CD4-positive, alpha-beta T cell (primary cell): ENCODE measurements at regions of chr17 and their contacts with region 1.

Region 1: GRCh38 chr17:39621523-39622379 is 5.0 kb upstream of the PPP1R1B start:
- DNase-seq: peak; percentile 67 to 96 (median 88)
- ATAC-seq: peak; percentile 74
- H3K4me3 ChIP-seq: peak overlapping the region; percentile 25
- H3K4me3 Mint-ChIP-seq: peak overlapping the region; percentile 62
- H3K27ac ChIP-seq: no peak overlapping the region
- H3K27ac Mint-ChIP-seq: peak overlapping the region; percentile 74
- H3K4me1 ChIP-seq: peaks cover 48% of the 10 kb centered on the region
- H3K4me1 Mint-ChIP-seq: peaks cover 25% of the 10 kb centered on the region
- H3K27me3 ChIP-seq: peaks cover 15 to 19% of the 10 kb centered on the region in 2 experiments
- H3K27me3 Mint-ChIP-seq: peaks cover 30% of the 10 kb centered on the region
- CTCF ChIP-seq: peak; percentile 100

Region 2: GRCh38 chr17:39450847-39451581 is 170.7 kb before region 1 on chr17 and contains the start of gene MED1:
- CTCF ChIA-PET with region 1: no interaction called
- POLR2A ChIA-PET with region 1: no interaction called
- intact Hi-C with region 1: no loop called
- DNase-seq: peak; percentile 80 to 98 (median 86)
- ATAC-seq: peak; percentile 92
- H3K4me3 ChIP-seq: peak within 1 kb of the TSS; percentile 75
- H3K4me3 Mint-ChIP-seq: peak within 1 kb of the TSS; percentile 99
- H3K27ac ChIP-seq: peak within 1 kb of the TSS; percentile 80 to 82
- H3K27ac Mint-ChIP-seq: peak within 1 kb of the TSS; percentile 99
- H3K4me1 ChIP-seq: peaks cover 22% of the 10 kb centered on the region
- H3K4me1 Mint-ChIP-seq: peaks cover 29% of the 10 kb centered on the region
- H3K27me3 ChIP-seq: no peaks in the 10 kb centered on the region
- H3K27me3 Mint-ChIP-seq: no peaks in the 10 kb centered on the region
- CTCF ChIP-seq: no peak
- total RNA-seq, gene MED1: 24.7 to 28.7 TPM

Region 3: GRCh38 chr17:39605492-39606433 is 16.0 kb before region 1 on chr17:
- CTCF ChIA-PET with region 1: interaction called, 17 read pairs
- POLR2A ChIA-PET with region 1: no interaction called
- intact Hi-C with region 1: no loop called
- DNase-seq: peak in 1 of 14 experiments; percentile 27
- ATAC-seq: no peak
- H3K4me3 ChIP-seq: no peak overlapping the region
- H3K4me3 Mint-ChIP-seq: peak overlapping the region; percentile 7
- H3K27ac ChIP-seq: no peak overlapping the region
- H3K27ac Mint-ChIP-seq: no peak overlapping the region
- H3K4me1 ChIP-seq: peaks cover 48% of the 10 kb centered on the region
- H3K4me1 Mint-ChIP-seq: peaks cover 20% of the 10 kb centered on the region
- H3K27me3 ChIP-seq: peaks cover 76 to 88% of the 10 kb centered on the region in 2 experiments
- H3K27me3 Mint-ChIP-seq: peaks cover 80% of the 10 kb centered on the region
- CTCF ChIP-seq: no peak

Region 4: DNA sequence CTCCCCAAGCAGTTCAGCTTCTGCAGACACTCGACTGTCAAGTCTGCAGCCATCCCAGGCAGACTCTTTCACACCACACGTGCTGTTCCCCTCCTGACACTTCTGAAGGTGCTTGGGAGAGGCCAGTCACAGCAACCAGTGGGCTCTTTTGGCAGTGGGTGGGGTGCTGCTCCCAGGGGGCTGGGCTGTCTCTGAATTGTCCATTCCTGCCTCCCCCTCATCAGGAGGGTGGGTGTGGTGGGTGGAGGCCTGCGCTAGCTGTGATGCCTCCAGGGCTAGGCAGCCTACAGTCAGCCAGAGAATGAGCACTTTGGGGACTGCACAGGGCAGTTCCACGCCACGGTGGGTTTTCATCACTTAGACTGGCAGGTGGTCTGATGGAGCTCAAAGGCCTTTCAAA is 25.5 kb after region 1 on chr17:
- CTCF ChIA-PET with region 1: interaction called, 20 read pairs
- POLR2A ChIA-PET with region 1: interaction called, 3 read pairs
- intact Hi-C with region 1: no loop called
- DNase-seq: no peak
- ATAC-seq: no peak
- H3K4me3 ChIP-seq: no peak overlapping the region
- H3K4me3 Mint-ChIP-seq: no peak overlapping the region
- H3K27ac ChIP-seq: no peak overlapping the region
- H3K27ac Mint-ChIP-seq: no peak overlapping the region
- H3K4me1 ChIP-seq: peaks cover 39% of the 10 kb centered on the region
- H3K4me1 Mint-ChIP-seq: peaks cover 53% of the 10 kb centered on the region
- H3K27me3 ChIP-seq: no peaks in the 10 kb centered on the region
- H3K27me3 Mint-ChIP-seq: no peaks in the 10 kb centered on the region
- CTCF ChIP-seq: no peak

Region 5: GRCh38 chr17:39668199-39668966 is 46.6 kb after region 1 on chr17 and contains the start of gene PNMT:
- CTCF ChIA-PET with region 1: interaction called, 19 read pairs
- POLR2A ChIA-PET with region 1: interaction called, 6 read pairs
- intact Hi-C with region 1: loop called (anchors 1 to 2 kb)
- DNase-seq: peak; percentile 42 to 85 (median 62)
- ATAC-seq: peak; percentile 80
- H3K4me3 ChIP-seq: peak within 1 kb of the TSS; percentile 32
- H3K4me3 Mint-ChIP-seq: peak within 1 kb of the TSS; percentile 59
- H3K27ac ChIP-seq: no peak within 1 kb of the TSS
- H3K27ac Mint-ChIP-seq: no peak within 1 kb of the TSS
- H3K4me1 ChIP-seq: peaks cover 35% of the 10 kb centered on the region
- H3K4me1 Mint-ChIP-seq: peaks cover 15% of the 10 kb centered on the region
- H3K27me3 ChIP-seq: peaks cover 15 to 34% of the 10 kb centered on the region in 2 experiments
- H3K27me3 Mint-ChIP-seq: peaks cover 34% of the 10 kb centered on the region
- CTCF ChIP-seq: peak; percentile 78
- total RNA-seq, gene PNMT: 0.47 TPM in 1 of 2 experiments, not detected in the other

Region 6: DNA sequence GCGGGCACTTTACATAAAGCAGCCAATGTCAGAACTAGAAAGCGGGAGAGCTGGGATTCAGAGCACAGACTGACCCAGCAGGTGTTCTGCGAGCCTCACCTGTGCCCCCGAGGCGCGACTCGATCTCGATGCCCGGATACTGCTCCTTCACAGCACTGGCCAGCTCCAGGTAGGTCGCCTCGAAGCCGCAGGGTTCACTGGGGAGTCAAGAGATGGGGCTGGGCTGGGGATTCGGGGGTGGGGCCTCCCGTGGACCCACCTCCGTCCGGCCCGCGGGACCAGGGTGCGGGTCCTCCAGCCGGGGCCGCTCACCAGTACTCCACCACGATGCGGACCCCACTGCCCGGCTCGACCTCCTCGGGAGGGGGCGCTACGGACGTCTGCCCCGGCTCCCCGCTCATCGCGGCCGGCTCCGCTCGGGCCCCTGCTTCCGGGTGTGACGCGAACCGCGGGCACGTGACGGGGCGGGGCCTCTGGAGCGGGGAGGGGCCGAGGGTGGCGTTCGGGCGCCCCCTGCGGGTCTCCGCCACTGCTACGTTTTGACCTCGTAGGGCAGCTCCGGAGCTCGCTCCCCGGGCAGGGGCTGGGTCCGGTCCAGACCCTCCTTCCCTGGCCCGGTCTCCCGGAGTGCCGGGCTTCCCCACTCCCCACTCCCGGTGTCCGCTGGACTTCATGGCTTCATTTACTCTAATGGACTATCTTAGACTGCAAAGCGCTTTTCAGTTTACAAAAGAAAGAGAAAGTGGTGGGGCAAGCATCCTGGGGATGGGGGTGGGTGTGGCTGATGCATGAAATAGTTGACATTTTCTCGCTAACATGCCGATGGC is 108.6 kb after region 1 on chr17 and contains the start of gene MIEN1:
- CTCF ChIA-PET with region 1: interaction called, 33 read pairs
- POLR2A ChIA-PET with region 1: interaction called, 12 read pairs
- intact Hi-C with region 1: loop called (anchors 1 to 5 kb)
- DNase-seq: peak; percentile 86 to 98 (median 94)
- ATAC-seq: peak; percentile 91
- H3K4me3 ChIP-seq: peak within 1 kb of the TSS; percentile 79
- H3K4me3 Mint-ChIP-seq: peak within 1 kb of the TSS; percentile 91
- H3K27ac ChIP-seq: peak within 1 kb of the TSS; percentile 90 to 91
- H3K27ac Mint-ChIP-seq: peak within 1 kb of the TSS; percentile 88
- H3K4me1 ChIP-seq: peaks cover 23% of the 10 kb centered on the region
- H3K4me1 Mint-ChIP-seq: peaks cover 17% of the 10 kb centered on the region
- H3K27me3 ChIP-seq: no peaks in the 10 kb centered on the region
- H3K27me3 Mint-ChIP-seq: no peaks in the 10 kb centered on the region
- CTCF ChIP-seq: peak; percentile 91
- total RNA-seq, gene MIEN1: 31.5 to 32.3 TPM

Region 7: GRCh38 chr17:39863918-39864746 is 242.4 kb after region 1 on chr17 and contains the start of gene IKZF3:
- CTCF ChIA-PET with region 1: interaction called, 8 read pairs
- POLR2A ChIA-PET with region 1: interaction called, 3 read pairs
- intact Hi-C with region 1: loop called (anchors 2 to 10 kb)
- DNase-seq: peak; percentile 55 to 95 (median 73)
- ATAC-seq: peak; percentile 75
- H3K4me3 ChIP-seq: peak within 1 kb of the TSS; percentile 80
- H3K4me3 Mint-ChIP-seq: peak within 1 kb of the TSS; percentile 96
- H3K27ac ChIP-seq: peak within 1 kb of the TSS; percentile 88 to 89
- H3K27ac Mint-ChIP-seq: peak within 1 kb of the TSS; percentile 94
- H3K4me1 ChIP-seq: peaks cover 37% of the 10 kb centered on the region
- H3K4me1 Mint-ChIP-seq: peaks cover 81% of the 10 kb centered on the region
- H3K27me3 ChIP-seq: no peaks in the 10 kb centered on the region
- H3K27me3 Mint-ChIP-seq: no peaks in the 10 kb centered on the region
- CTCF ChIP-seq: peak; percentile 54
- total RNA-seq, gene IKZF3: 39.7 to 39.9 TPM